Activated CD4-positive, alpha-beta T cell treated with anti-CD3 and anti-CD28 coated beads, Interleukin-2, amount 10 ng/mL, durations not matched to agents 24 days and 14 days (primary cell): ENCODE measurements at regions of chr6 and their contacts with region 1.

Region 1: GRCh38 chr6:28443112-28443773 is at the start of gene ZSCAN23:
- DNase-seq: peak; percentile 96
- H3K4me3 Mint-ChIP-seq: peak within 1 kb of the TSS; percentile 100
- H3K27ac Mint-ChIP-seq: peak within 1 kb of the TSS; percentile 96
- H3K4me1 Mint-ChIP-seq: peaks cover 28% of the 10 kb centered on the region
- H3K27me3 Mint-ChIP-seq: peaks cover 24% of the 10 kb centered on the region
- total RNA-seq, gene ZSCAN23: 1.2 and 2.8 TPM in 2 replicates

Region 2: DNA sequence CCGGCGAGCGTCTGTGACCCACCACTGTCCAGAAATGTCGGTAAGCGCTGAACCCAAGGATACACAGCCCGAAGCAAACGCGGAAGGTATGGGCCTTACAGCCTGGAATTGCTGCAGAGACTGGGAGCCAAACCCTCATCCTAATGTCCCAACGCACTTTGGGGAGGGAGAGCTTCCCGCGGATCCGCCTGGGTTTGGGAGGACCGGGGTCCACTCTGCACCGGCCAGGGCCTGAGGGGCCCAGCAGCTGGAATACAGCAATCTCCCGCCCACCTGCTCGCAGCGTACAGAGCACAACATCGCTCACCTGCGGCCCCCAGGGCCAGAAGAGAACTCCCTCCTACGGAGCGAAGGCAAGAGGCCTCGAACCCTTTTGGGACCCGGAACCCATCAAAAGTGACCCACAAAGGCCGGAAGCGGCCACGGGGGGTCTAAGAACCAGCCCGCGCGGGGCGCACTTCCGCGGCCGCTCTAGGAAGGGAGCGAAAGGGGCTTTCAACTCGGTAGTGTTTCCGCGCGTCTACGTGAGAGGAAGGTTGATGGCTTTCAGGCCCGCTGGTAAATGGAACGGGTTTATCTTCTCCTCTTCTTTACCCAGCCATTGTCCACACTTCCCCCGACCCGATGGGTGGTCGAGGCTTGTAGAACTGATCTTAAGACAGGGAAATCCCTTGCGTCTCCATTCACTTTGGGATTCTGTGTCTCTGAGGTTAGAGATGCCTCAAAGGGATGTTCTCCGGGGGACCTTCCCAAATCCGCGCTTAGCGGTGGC is 43.7 kb before region 1 on chr6 and contains the start of gene ZSCAN12:
- intact Hi-C with region 1: loop called (anchors 1 kb)
- DNase-seq: peak; percentile 95
- H3K4me3 Mint-ChIP-seq: peak within 1 kb of the TSS; percentile 93
- H3K27ac Mint-ChIP-seq: peak within 1 kb of the TSS; percentile 92
- H3K4me1 Mint-ChIP-seq: peaks cover 49% of the 10 kb centered on the region
- H3K27me3 Mint-ChIP-seq: peaks cover 23% of the 10 kb centered on the region
- total RNA-seq, gene ZSCAN12: 5.8 and 5.9 TPM in 2 replicates

Region 3: DNA sequence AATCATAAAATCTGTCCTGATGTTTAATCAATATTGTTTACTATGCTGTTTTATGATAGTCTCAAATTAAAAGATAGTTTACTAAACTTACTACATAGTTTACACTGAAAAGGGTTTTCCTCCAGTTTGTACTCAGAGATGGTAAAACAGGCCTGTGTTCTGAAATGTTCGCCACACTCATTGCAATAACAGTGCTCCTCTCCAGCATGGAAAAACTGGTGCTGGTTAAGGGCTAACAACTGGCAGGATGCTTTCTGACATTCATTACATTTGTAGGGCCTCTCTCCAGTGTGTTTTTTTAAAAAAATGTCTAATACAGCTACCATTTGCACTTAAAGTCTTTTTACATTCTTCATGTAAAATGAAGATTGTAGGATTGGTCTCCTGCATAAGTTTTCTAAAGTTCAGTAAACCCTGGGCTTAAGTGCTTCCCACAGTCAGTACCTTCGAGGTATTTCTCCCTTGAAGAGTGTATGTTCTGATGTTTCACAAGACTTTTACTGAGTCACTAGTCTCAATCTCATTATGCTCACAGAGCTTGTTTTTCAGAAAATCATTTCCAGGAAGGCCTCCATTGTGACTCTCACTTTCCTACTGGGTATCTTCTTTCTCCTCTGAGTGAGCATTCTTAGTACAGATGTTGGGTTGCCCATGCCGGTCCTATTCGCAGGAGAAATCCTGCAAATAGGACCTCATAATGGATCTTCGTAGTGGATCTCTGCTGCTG is 35.0 kb before region 1 on chr6:
- intact Hi-C with region 1: loop called (anchors 2 kb)
- DNase-seq: peak; percentile 65
- H3K4me3 Mint-ChIP-seq: no peak overlapping the region
- H3K27ac Mint-ChIP-seq: peak overlapping the region; percentile 77
- H3K4me1 Mint-ChIP-seq: peaks cover 28% of the 10 kb centered on the region
- H3K27me3 Mint-ChIP-seq: peaks cover 28% of the 10 kb centered on the region

Region 4: DNA sequence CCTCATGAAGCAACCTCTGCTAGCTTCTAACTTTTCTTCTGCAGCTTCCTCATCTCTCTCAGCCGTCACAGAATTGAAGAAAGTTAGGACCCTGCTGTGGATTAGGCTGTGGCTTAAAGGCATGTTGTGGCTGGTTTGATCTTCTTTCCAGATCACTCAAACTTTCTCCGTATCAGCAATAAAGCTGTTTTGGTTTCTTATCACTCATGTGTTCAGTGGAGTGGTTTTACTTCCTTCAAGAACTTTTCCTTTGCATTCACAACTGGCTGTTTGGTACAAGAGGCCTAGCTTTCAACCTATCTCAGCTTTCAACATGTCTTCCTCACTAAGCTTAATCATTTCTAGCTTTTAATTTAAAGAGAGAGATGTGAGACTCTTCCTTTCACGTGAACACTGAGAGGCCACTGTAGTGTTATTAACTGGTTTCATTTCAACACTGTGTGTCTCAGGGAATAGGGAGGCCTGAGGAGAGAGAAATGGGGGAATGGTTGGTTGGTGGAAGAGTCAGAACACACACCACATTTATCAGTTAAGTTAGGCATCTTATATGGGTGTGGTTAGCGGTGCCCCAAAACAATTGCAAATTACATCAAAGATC is 17.2 kb before region 1 on chr6:
- intact Hi-C with region 1: loop called (anchors 1 kb)
- DNase-seq: peak; percentile 73
- H3K4me3 Mint-ChIP-seq: peak overlapping the region; percentile 41
- H3K27ac Mint-ChIP-seq: peak overlapping the region; percentile 10
- H3K4me1 Mint-ChIP-seq: peaks cover 24% of the 10 kb centered on the region
- H3K27me3 Mint-ChIP-seq: peaks cover 31% of the 10 kb centered on the region

Region 5: DNA sequence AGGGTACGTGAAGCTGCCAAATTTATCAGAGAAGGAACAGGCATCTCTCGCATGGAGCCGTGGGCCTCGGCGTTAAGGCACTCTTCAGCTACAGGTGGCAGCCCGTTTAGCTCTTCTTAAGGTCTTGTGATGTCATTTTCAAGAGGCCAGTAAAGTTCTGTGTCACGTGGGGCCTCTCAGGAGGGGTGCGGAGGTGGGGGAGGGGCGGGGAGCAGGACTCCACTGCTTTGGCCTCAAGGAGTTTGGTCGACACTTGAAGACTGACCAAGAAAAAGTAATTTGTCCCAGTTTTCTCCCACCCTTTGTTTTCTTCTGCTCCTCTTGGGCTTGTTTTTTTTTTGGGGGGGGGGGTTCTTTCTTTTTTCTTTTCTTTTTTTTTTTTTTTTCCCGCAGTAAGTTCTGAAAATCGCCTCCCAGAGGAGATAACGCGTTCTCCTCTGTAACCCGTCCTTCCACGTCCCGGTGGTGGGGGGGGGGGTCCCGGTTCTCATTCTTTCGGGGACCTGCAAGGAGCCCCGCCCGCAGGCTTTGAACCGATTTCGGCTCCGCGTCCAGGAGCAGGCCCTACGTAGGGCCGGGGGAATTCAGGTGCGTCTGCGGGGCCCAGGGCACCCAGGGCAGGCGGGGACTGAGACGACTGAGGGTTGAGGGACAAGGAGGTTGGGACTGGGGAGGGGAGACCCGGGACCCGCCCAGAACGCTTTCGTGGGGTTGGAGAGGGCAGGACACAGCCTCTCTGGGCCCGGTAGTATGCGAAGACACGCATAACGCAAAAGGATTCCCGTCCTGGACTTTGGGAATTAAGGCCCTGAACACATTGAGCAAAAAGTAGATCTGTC is 46.3 kb after region 1 on chr6:
- intact Hi-C with region 1: loop called (anchors 5 kb)
- DNase-seq: peak; percentile 79
- H3K4me3 Mint-ChIP-seq: peak overlapping the region; percentile 77
- H3K27ac Mint-ChIP-seq: peak overlapping the region; percentile 70
- H3K4me1 Mint-ChIP-seq: peaks cover 18% of the 10 kb centered on the region
- H3K27me3 Mint-ChIP-seq: peaks cover 46% of the 10 kb centered on the region